Heart left ventricle (tissue), 16 donors: ENCODE measurements at regions of chr12 and their contacts with region 1.

Region 1: GRCh38 chr12:122888232-122888867 is 7.6 kb downstream of the VPS37B start:
- DNase-seq: peak in 3 of 5 donors; percentile 37 to 73 (median 54)
- ATAC-seq: peak; percentile 78 to 82 (median 80)
- H3K4me3 ChIP-seq: peak overlapping the region in 9 of 12 donors; percentile 7 to 43 (median 24)
- H3K27ac ChIP-seq: peak overlapping the region; percentile 63 to 90 (median 79)
- H3K4me1 ChIP-seq: peaks cover 9 to 95% (median 82%) of the 10 kb centered on the region in 12 donors
- H3K27me3 ChIP-seq: no peaks in the 10 kb centered on the region
- CTCF ChIP-seq: no peak
- POLR2A ChIP-seq: no peak

Region 2: DNA sequence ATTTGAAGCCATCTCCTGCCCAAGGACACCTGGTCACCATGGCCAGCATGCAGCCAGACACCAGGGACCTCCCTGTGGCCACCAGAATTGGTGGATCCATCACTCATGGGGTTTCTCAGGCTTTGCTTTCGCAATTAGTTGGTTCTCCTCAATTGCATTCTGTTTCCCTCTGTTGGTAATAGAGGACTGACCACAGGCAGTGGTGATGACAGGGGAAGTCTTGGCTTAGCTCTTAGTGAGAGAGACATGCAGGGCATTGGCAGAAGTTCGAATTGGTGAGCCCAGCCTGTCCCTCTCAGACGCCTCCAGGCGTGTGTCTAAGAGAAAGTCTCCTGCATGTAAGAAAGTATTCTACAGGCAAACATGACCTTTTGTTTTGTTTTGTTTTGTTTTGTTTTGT is 206.5 kb before region 1 on chr12:
- intact Hi-C with region 1: no loop called
- DNase-seq: no peak
- ATAC-seq: peak in 2 of 4 donors; percentile 36 to 55
- H3K4me3 ChIP-seq: no peak overlapping the region
- H3K27ac ChIP-seq: no peak overlapping the region
- H3K4me1 ChIP-seq: peaks cover 0 to 12% (median 0%) of the 10 kb centered on the region in 12 donors
- H3K27me3 ChIP-seq: no peaks in the 10 kb centered on the region
- CTCF ChIP-seq: no peak
- POLR2A ChIP-seq: no peak

Region 3: GRCh38 chr12:122726080-122726558 is 162.2 kb before region 1 on chr12:
- intact Hi-C with region 1: no loop called
- DNase-seq: no peak
- ATAC-seq: no peak
- H3K4me3 ChIP-seq: no peak overlapping the region
- H3K27ac ChIP-seq: no peak overlapping the region
- H3K4me1 ChIP-seq: peaks cover 0 to 29% (median 0%) of the 10 kb centered on the region in 12 donors
- H3K27me3 ChIP-seq: peaks cover 0 to 4% (median 0%) of the 10 kb centered on the region in 9 donors
- CTCF ChIP-seq: no peak
- POLR2A ChIP-seq: no peak

Region 4: DNA sequence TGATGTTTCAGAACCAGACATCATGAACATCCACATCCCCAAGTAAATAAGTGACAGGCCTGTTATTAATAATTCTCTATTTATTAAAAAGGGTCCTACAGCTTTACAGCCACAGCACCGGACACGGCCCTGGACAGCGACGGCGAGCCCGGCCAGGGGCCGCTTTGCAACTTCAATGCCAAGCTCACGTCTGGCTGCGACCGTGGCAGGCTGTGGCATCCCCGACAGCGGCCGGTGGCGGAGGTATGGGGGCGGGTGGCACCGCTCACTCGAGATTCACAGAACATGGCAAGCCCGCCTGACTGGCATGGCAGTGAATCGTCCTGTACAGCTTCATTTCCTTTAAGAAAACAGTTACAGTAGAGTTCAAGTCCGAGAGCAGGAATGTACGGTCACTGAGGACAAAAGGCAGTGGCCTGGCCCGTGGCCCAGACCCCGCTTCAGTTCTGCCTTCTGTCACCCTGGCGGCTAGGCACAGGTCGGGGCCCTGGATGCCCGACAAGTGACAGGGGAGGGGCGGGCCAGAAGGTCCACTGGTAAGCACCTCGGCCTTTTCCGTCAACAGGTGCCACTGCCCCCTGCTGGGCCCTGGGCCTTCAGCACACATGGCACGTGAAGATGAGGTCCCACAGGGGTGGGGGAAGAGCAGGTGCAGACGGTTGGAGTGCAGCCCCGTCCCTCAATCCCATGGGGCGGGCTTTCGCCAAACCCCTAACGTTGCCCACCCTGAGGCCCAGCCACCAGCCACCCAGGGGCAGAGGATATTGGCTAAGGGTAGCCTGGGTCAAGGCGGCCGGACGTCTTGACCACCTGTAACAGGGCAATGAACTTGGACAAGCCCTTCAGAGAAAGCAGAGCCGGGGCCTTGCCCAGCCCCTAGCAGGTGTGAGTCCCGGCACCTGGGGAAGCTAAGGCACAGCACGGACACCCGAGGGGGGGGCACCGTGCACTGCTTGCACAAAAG is 22.8 kb before region 1 on chr12:
- intact Hi-C with region 1: loop called in 1 of 10 experiments (anchors 1 kb)
- DNase-seq: peak in 3 of 5 donors; percentile 69 to 81 (median 77)
- ATAC-seq: peak; percentile 5 to 35 (median 20)
- H3K4me3 ChIP-seq: no peak overlapping the region
- H3K27ac ChIP-seq: peak overlapping the region in 11 of 12 donors; percentile 15 to 89 (median 78)
- H3K4me1 ChIP-seq: peaks cover 8 to 85% (median 67%) of the 10 kb centered on the region in 12 donors
- H3K27me3 ChIP-seq: no peaks in the 10 kb centered on the region
- CTCF ChIP-seq: peak; percentile 13 to 55 (median 30)
- POLR2A ChIP-seq: no peak

Region 5: GRCh38 chr12:122871851-122872780 is 16.2 kb before region 1 on chr12:
- intact Hi-C with region 1: loop called in 2 of 10 experiments (anchors 1 to 2 kb)
- DNase-seq: peak; percentile 68 to 81 (median 78)
- ATAC-seq: peak; percentile 29 to 71 (median 58)
- H3K4me3 ChIP-seq: peak overlapping the region in 11 of 12 donors; percentile 16 to 60 (median 50)
- H3K27ac ChIP-seq: peak overlapping the region; percentile 83 to 93 (median 87)
- H3K4me1 ChIP-seq: peaks cover 17 to 99% (median 85%) of the 10 kb centered on the region in 12 donors
- H3K27me3 ChIP-seq: no peaks in the 10 kb centered on the region
- CTCF ChIP-seq: no peak
- POLR2A ChIP-seq: no peak

Region 6: DNA sequence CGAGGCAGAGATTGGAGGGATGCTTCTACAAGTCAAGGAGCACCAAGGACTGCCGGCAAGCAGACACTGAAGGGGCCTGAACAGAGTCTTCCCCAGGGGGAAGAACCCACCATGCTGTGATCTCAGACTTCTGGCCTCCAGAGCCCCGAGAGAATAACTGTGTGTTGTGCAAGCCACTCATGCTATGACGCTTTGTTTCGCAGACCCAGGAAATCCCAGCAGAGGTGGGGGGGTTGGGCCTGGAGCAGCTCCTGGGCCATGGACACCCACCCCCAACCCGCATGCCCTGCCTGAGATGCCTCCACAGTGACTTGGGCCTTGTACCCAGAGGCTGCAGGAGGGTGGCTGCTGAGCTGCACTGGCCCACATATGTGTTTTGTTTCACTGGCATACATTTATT is 123.4 kb after region 1 on chr12:
- intact Hi-C with region 1: no loop called
- DNase-seq: no peak
- ATAC-seq: no peak
- H3K4me3 ChIP-seq: no peak overlapping the region
- H3K27ac ChIP-seq: no peak overlapping the region
- H3K4me1 ChIP-seq: no peaks in the 10 kb centered on the region
- H3K27me3 ChIP-seq: no peaks in the 10 kb centered on the region
- CTCF ChIP-seq: no peak
- POLR2A ChIP-seq: no peak